Activated CD8-positive, alpha-beta memory T cell treated with anti-CD3 and anti-CD28 coated beads, Interleukin-2, amount 10 ng/mL, durations not matched to agents 7 days and 5 days (primary cell): ENCODE measurements at regions of chr2 and their contacts with region 1.

Region 1: DNA sequence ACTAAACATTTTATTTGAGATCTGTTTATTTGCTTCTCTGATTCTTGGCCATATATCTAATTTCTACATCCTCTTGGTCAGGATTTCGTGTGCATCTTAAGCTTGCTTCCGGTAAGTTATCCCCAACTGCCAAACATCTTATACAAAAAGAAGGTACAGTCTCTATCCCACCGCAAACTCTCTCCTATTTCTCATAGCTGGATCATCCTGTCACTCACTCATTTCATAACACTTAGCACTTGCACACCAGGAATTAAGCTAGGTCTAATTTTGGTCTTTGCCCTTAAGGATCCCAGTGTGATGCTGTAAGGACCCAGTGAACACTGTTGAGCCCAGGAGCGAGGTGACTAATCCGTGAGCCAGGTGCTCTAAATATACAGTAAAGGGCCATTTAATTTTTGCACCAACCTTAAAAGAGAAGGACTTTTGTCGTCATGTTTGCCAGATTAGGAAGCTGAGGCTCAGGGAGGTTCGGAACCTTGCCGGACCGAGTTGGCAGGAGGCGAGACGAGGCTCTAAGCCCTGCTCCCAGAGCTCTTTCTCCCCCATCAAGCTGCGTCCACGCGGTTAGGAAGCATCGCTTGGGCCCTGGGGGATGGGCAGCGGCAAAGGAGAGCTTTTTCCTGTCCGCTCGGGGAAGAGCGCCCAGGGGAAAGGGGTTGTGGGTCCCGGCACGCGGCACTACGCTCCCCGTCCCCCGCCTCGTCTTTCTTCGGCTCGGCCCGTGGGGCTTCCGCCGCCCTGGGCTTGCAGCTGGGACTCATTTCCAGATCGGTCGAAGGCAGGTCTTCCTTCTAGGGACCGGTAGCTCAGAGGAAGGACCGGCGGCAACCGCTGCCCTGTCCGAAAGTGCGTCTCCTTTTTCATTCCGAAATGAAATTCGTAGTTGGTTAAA is 4.1 kb upstream of the ITPRIPL1 start:
- DNase-seq: peak; percentile 67
- ATAC-seq: peak; percentile 24
- H3K4me3 Mint-ChIP-seq: peak overlapping the region; percentile 87
- H3K27ac Mint-ChIP-seq: peak overlapping the region; percentile 87
- H3K4me1 Mint-ChIP-seq: peaks cover 71% of the 10 kb centered on the region
- H3K27me3 Mint-ChIP-seq: no peaks in the 10 kb centered on the region

Region 2: GRCh38 chr2:96195410-96196066 is 125.4 kb before region 1 on chr2:
- CTCF ChIA-PET with region 1: no interaction called
- DNase-seq: no peak
- ATAC-seq: no peak
- H3K4me3 Mint-ChIP-seq: no peak overlapping the region
- H3K27ac Mint-ChIP-seq: peak overlapping the region; percentile 54
- H3K4me1 Mint-ChIP-seq: peaks cover 51% of the 10 kb centered on the region
- H3K27me3 Mint-ChIP-seq: no peaks in the 10 kb centered on the region

Region 3: DNA sequence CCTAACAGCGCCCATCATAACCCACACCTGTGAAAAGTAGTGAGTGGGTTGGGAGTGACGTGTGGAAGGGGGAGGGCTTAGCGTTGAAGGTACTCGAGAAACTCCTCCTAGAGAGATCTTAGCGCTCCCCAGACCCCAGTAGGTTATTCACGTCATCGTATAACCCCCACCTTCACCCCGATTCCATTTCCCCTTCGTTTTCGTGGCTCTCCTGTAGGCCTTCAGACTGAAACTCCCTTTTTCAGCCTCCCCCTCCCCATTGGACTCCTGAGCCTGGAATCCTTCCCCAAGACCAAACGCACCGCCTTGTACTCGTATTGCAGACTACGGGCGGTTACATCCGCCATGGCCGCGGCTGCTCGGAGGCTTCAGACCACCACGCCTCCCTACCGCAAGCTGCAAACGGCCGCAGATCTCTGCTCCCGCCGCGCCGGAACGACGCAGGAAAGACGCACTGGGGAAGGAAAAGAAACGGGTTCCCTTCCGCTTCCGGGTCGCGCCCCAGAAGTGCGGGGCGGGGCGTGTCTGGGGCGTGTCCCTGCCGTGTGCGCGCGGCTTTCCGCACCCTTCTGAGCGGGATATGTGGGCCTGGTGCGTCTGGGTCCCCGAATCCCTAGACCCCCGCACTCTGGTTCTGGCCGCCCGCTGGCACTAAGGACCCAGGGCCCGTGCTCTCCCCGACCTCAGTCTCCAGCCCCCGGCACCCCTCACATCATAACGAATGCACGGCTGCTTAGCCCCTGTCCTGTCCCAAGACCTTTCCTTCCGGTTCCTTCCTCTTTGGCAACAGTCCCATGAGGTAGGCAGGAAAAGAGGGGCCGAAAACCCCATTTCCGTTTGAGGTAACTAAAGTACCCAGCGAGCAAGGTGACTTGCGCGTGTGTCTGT is 15.6 kb before region 1 on chr2 and contains the start of gene SNRNP200:
- CTCF ChIA-PET with region 1: interaction called, 17 read pairs
- DNase-seq: peak; percentile 94
- ATAC-seq: peak; percentile 95
- H3K4me3 Mint-ChIP-seq: peak within 1 kb of the TSS; percentile 100
- H3K27ac Mint-ChIP-seq: peak within 1 kb of the TSS; percentile 97
- H3K4me1 Mint-ChIP-seq: peaks cover 63% of the 10 kb centered on the region
- H3K27me3 Mint-ChIP-seq: no peaks in the 10 kb centered on the region
- total RNA-seq, gene SNRNP200: 170 to 182 TPM

Region 4: GRCh38 chr2:96336104-96336775 is 15.3 kb after region 1 on chr2:
- CTCF ChIA-PET with region 1: interaction called, 35 read pairs
- DNase-seq: no peak
- ATAC-seq: no peak
- H3K4me3 Mint-ChIP-seq: peak overlapping the region; percentile 97
- H3K27ac Mint-ChIP-seq: peak overlapping the region; percentile 91
- H3K4me1 Mint-ChIP-seq: peaks cover 65% of the 10 kb centered on the region
- H3K27me3 Mint-ChIP-seq: no peaks in the 10 kb centered on the region

Region 5: DNA sequence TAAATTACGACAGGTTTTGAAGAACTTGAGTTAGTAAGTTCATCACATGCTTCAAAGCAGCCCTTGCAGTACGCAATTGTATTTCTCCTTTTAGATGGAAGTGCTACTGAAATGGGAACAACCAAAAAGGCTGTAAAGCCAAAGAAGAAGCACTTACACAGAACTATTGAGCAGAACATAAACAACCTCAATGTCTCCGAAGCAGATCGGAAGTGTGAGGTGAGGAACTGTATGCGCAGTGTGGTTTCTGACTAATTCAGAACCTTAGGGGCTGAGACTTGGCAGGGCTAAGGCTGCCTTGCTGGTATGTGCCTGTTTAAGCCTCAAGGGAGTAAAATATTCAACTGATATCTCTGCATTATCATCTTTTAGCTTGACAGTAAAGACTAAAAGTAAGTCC is 23.0 kb after region 1 on chr2:
- CTCF ChIA-PET with region 1: interaction called, 13 read pairs
- DNase-seq: peak; percentile 89
- ATAC-seq: peak; percentile 90
- H3K4me3 Mint-ChIP-seq: peak overlapping the region; percentile 47
- H3K27ac Mint-ChIP-seq: peak overlapping the region; percentile 92
- H3K4me1 Mint-ChIP-seq: peaks cover 74% of the 10 kb centered on the region
- H3K27me3 Mint-ChIP-seq: no peaks in the 10 kb centered on the region